ENCODE measurements at regions of chr12 and their contacts with region 1.

Region 1: DNA sequence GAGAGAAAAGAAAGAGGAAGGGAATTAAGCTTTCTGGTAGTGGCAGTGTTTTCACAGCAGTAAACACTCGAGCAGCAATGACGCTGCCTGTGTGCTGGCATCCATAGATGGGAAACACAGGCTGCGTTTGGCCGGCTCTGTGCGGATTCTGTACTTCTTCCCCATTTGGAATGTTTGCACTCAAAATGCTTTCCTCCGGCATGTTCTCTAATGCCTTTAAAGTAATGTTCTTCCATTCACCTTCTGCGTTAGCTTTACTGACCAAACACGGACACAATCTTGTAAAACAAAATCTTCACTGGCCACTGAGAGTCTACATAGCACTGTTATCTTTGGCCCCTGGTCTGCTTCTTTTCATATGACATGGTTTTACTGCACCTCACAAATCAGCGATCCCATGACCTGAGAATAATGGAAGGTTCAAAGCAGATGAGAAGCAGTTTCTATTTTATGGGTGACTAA is 31.4 kb downstream of the DCP1B start:
- DNase-seq: peak in 4 of 5 donors; percentile 51 to 64 (median 56)
- ATAC-seq: peak; percentile 65 to 82 (median 76)
- H3K4me3 ChIP-seq: peak overlapping the region; percentile 11 to 60 (median 52)
- H3K27ac ChIP-seq: peak overlapping the region; percentile 75 to 92 (median 86)
- H3K4me1 ChIP-seq: peaks cover 0 to 43% (median 11%) of the 10 kb centered on the region in 12 donors
- H3K27me3 ChIP-seq: no peaks in the 10 kb centered on the region
- CTCF ChIP-seq: no peak
- POLR2A ChIP-seq: no peak

Region 2: GRCh38 chr12:2163172-2163941 is 190.5 kb after region 1 on chr12:
- intact Hi-C with region 1: loop called in 1 of 10 experiments (anchors 10 kb)
- DNase-seq: peak; percentile 91 to 95 (median 93)
- ATAC-seq: peak; percentile 79 to 94 (median 91)
- H3K4me3 ChIP-seq: no peak overlapping the region
- H3K27ac ChIP-seq: peak overlapping the region; percentile 60 to 86 (median 82)
- H3K4me1 ChIP-seq: peaks cover 4 to 67% (median 43%) of the 10 kb centered on the region in 12 donors
- H3K27me3 ChIP-seq: no peaks in the 10 kb centered on the region
- CTCF ChIP-seq: peak in 4 of 12 donors; percentile 5 to 14 (median 8)
- POLR2A ChIP-seq: no peak

Region 3: DNA sequence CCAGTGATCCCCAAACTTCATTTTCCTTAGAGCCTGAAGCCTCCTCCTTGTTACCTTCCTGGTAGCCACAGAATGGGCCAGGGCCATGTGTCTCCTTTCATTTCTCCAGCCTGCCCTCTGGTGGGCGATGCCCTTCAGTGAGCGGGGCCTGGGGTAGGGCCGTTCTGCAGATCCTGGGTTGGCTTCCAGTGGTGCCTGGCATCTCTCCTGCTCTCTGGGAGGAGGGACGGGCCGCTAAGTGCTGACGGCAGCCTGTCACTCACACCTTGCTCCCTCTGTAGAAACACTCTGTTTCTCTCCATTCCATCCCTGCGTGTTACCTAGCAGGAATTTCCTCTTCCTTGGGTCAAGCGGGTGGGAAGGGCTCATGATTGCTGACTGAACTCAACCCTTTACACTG is 312.0 kb after region 1 on chr12:
- intact Hi-C with region 1: loop called in 2 of 10 experiments (anchors 5 kb)
- DNase-seq: peak; percentile 79 to 92 (median 89)
- ATAC-seq: peak; percentile 77 to 87 (median 82)
- H3K4me3 ChIP-seq: no peak overlapping the region
- H3K27ac ChIP-seq: peak overlapping the region in 10 of 12 donors; percentile 58 to 82 (median 76)
- H3K4me1 ChIP-seq: peaks cover 4 to 88% (median 79%) of the 10 kb centered on the region in 12 donors
- H3K27me3 ChIP-seq: no peaks in the 10 kb centered on the region
- CTCF ChIP-seq: peak; percentile 45 to 77 (median 64)
- POLR2A ChIP-seq: no peak